B cell (primary cell): ENCODE measurements at regions of chr20 and their contacts with region 1.

Region 1: GRCh38 chr20:31555203-31555775 is 41.0 kb downstream of the HM13 start:
- DNase-seq: no peak
- ATAC-seq: no peak
- H3K4me3 ChIP-seq: no peak overlapping the region
- H3K4me3 Mint-ChIP-seq: no peak overlapping the region
- H3K27ac ChIP-seq: no peak overlapping the region
- H3K27ac Mint-ChIP-seq: peak overlapping the region; percentile 32
- H3K4me1 ChIP-seq: no peaks in the 10 kb centered on the region
- H3K4me1 Mint-ChIP-seq: no peaks in the 10 kb centered on the region
- H3K27me3 ChIP-seq: no peaks in the 10 kb centered on the region
- H3K27me3 Mint-ChIP-seq: no peaks in the 10 kb centered on the region
- CTCF ChIP-seq: no peak

Region 2: GRCh38 chr20:31572701-31573554 is 17.6 kb after region 1 on chr20:
- CTCF ChIA-PET with region 1: interaction called, 62 read pairs
- POLR2A ChIA-PET with region 1: no interaction called
- intact Hi-C with region 1: no loop called
- DNase-seq: peak; percentile 90
- ATAC-seq: peak; percentile 94
- H3K4me3 ChIP-seq: peak overlapping the region; percentile 51 to 83 (median 71)
- H3K4me3 Mint-ChIP-seq: peak overlapping the region; percentile 92
- H3K27ac ChIP-seq: peak overlapping the region; percentile 49 to 76
- H3K27ac Mint-ChIP-seq: peak overlapping the region; percentile 80
- H3K4me1 ChIP-seq: peaks cover 10 to 18% of the 10 kb centered on the region in 2 donors
- H3K4me1 Mint-ChIP-seq: peaks cover 19% of the 10 kb centered on the region
- H3K27me3 ChIP-seq: no peaks in the 10 kb centered on the region
- H3K27me3 Mint-ChIP-seq: no peaks in the 10 kb centered on the region
- CTCF ChIP-seq: no peak